ENCODE measurements at regions of chr1 and their contacts with region 1.

Region 1: GRCh38 chr1:24201941-24202440 is 14.9 kb upstream of the IFNLR1 start:
- DNase-seq: peak in 2 of 4 donors; percentile 73 to 83
- ATAC-seq: peak; percentile 89
- H3K4me3 ChIP-seq: no peak overlapping the region
- H3K27ac ChIP-seq: no peak overlapping the region
- H3K4me1 ChIP-seq: peaks cover 0 to 32% of the 10 kb centered on the region in 2 donors
- H3K27me3 ChIP-seq: no peaks in the 10 kb centered on the region
- CTCF ChIP-seq: peak; percentile 75 to 79

Region 2: GRCh38 chr1:24253569-24253968 is 51.6 kb after region 1 on chr1:
- intact Hi-C with region 1: no loop called
- DNase-seq: no peak
- ATAC-seq: no peak
- H3K4me3 ChIP-seq: no peak overlapping the region
- H3K27ac ChIP-seq: no peak overlapping the region
- H3K4me1 ChIP-seq: peaks cover 0 to 5% of the 10 kb centered on the region in 2 donors
- H3K27me3 ChIP-seq: no peaks in the 10 kb centered on the region
- CTCF ChIP-seq: no peak

Region 3: DNA sequence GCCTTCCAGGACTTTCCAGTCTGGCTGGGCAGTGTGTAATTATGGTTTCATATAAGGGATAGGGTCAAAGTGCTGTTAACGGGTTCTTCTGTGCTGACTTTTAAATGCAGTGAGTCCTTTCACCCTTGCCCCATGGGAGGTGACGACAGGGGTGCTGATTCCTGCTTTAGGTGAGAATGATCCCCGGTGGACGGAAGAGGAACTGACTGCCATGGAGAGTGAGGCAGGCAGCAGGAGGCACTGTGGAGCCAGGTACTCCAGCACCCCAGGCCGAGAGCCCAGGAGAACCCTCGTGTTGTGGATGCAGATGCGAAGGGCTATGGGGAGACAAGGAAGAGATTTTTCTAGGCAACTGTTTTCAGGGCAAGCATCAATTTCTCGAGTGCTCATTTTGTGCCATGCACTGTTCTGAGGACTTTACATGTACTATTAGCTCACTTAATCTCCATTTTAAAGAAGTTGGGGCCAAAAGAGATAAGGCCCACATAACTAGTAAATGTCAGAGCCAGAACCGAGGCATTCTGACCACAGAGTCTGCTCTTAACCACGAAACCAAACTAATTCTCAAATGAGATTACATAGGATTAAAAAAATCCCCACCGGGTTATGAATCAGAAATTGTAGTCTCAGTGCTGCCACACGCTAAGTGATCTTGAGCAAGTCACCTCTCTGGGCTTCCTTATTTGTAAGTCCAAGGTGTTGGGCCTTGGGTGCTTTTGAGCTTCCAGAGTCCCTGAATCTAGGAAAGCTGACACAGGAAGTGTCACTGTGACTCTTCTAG is 183.4 kb after region 1 on chr1:
- intact Hi-C with region 1: loop called (anchors 2 to 10 kb)
- DNase-seq: no peak
- ATAC-seq: no peak
- H3K4me3 ChIP-seq: no peak overlapping the region
- H3K27ac ChIP-seq: peak overlapping the region in 1 of 2 donors; percentile 91
- H3K4me1 ChIP-seq: peaks cover 5 to 43% of the 10 kb centered on the region in 2 donors
- H3K27me3 ChIP-seq: no peaks in the 10 kb centered on the region
- CTCF ChIP-seq: peak in 1 of 2 donors; percentile 18

Region 4: DNA sequence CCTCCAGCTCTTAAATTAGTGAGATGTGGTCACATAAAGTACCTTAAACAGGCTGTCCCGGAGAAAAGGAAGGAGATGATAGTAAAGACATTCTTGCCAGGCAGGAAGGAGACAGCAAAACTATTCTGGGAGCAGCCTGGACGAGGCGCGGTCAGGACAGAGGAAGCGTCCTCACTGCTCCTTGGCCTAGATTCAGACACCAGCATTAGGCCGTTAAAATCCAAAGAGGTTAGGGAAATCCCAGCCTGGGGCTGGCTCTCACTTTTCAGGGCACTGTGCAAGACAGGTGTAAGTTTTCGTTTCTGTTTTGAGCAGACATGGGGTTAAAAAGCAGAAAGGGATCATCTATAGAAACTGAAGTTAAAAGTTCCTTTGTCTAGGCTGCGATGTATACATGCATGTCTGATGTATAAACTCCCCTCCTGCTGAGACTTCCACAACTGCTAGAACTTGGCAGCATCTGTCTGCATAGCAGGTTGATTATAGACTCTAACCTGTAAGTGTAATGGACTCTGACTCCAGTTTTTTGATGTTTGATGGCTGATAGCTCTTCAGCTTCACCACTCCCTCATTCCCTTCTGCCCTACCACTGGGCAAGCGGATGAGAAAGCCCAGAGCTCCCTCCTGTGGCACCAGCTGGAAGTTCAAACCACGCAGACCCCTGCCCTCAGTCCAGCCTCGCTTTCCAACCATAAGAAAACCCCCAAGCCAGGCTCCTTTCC is 190.1 kb after region 1 on chr1:
- intact Hi-C with region 1: loop called (anchors 2 to 10 kb)
- DNase-seq: peak in 2 of 4 donors; percentile 32 to 58
- ATAC-seq: peak; percentile 92
- H3K4me3 ChIP-seq: no peak overlapping the region
- H3K27ac ChIP-seq: peak overlapping the region; percentile 45
- H3K4me1 ChIP-seq: peaks cover 4 to 40% of the 10 kb centered on the region in 2 donors
- H3K27me3 ChIP-seq: no peaks in the 10 kb centered on the region
- CTCF ChIP-seq: peak; percentile 64 to 69

Region 5: DNA sequence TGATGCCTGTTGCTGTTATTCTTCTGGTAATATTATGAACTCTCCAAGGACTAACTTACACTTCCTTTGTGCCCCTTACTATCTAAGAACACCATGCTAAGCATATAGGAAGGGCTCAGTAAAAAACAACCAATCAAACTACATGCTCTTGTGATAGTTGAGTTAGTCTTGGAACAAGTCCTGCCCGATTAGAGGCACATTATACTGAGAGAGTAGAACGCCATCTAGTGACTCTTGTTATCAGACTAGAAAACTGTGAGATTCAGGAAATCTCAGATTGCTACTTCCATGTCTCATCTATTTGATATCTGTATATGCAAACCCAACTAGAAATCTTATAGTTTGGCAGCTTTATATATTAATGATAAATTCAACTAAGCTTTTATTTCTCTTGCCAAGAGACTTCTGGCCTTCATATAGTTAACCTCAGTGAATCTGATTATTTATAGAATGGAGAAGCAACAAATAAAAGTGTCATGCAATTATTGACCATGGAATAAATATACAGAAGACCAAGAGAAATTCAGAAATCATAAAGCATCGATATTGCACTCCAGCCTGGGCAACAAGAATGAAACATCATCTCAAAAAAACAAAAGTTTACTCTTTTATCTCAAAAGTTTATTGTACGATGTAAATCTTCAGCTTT is 433.3 kb after region 1 on chr1:
- intact Hi-C with region 1: loop called in 1 of 2 experiments (anchors 10 kb)
- DNase-seq: peak in 2 of 4 donors; percentile 51 to 69
- ATAC-seq: peak; percentile 90
- H3K4me3 ChIP-seq: no peak overlapping the region
- H3K27ac ChIP-seq: no peak overlapping the region
- H3K4me1 ChIP-seq: no peaks in the 10 kb centered on the region
- H3K27me3 ChIP-seq: no peaks in the 10 kb centered on the region
- CTCF ChIP-seq: peak; percentile 18 to 53